GM10248 (cell line): ENCODE measurements at regions of chr18 and their contacts with region 1.

Region 1: DNA sequence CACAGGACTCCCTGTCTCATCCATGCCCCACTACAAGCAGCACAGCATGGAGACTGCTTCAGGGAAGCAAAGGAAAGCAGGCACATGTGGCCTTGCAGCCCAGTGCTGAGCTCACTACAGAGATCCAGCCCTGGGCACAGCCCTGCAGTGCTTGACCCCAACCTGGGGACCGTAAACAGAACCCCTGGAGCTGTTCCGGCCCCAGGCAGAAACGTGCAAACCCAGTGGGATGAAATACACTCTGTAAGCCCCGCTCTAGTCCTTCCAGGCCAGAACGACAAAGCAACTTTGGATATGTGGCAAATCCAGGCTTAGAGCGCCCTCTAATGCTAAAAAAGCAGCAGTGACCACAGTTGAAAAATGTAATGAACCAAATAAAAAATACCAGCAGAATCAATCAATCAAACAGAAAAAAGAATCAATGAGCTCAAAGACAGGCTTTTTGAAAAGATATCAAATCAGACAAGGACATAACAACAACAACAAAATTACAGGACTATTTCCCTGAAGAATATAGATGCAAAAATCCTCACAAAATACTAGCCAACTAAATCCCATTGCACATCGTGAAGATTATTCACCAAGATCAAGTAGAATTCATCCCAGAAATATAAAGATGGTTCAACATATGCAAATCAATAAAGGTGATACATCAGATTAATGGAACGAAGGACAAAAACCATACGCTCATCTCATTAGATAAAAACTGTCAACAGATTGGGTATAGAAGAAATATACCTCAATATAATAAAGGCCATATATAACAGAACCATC is 45.6 kb downstream of the ZNF519 start:
- DNase-seq: peak; percentile 45
- CTCF ChIP-seq: peak; percentile 57

Region 2: DNA sequence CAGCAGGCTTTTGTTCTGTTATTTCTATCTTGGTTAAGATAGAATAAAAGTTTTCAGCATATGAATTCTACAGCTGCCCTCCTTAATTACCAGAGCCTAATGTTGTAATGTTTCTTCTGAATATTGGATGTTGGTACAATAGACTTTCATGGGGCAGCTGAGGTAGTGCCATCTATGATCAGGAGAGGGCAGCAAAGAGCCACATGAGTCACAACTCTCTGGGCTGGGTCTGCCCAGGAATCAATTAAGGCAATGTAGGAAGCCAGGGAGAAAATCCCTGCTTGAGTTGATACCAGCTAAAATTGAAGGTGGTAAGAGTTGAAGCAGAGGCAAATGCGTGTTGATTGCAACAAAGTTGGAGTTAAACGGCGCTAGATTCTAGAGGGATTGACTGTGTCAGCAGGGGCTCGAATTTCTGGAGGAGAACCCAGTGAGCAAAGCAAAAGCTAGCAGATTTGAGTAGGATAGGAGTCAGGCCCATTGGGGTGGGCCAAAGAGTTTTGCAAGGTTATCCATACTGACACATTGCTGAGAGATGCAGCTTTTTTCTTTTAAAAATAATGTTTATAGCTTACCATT is 273.3 kb before region 1 on chr18:
- CTCF ChIA-PET with region 1: interaction called, 70 read pairs
- POLR2A ChIA-PET with region 1: no interaction called
- DNase-seq: peak; percentile 73
- CTCF ChIP-seq: peak; percentile 86

Region 3: GRCh38 chr18:13823707-13824395 is 262.8 kb before region 1 on chr18 and contains the start of gene MC5R:
- CTCF ChIA-PET with region 1: interaction called, 38 read pairs
- POLR2A ChIA-PET with region 1: no interaction called
- DNase-seq: peak; percentile 90
- CTCF ChIP-seq: peak; percentile 99

Region 4: GRCh38 chr18:13831864-13832508 is 254.7 kb before region 1 on chr18:
- CTCF ChIA-PET with region 1: interaction called, 27 read pairs
- POLR2A ChIA-PET with region 1: no interaction called
- DNase-seq: no peak
- CTCF ChIP-seq: no peak

Region 5: GRCh38 chr18:13932285-13933025 is 154.2 kb before region 1 on chr18:
- CTCF ChIA-PET with region 1: no interaction called
- POLR2A ChIA-PET with region 1: no interaction called
- DNase-seq: no peak
- CTCF ChIP-seq: no peak

Region 6: DNA sequence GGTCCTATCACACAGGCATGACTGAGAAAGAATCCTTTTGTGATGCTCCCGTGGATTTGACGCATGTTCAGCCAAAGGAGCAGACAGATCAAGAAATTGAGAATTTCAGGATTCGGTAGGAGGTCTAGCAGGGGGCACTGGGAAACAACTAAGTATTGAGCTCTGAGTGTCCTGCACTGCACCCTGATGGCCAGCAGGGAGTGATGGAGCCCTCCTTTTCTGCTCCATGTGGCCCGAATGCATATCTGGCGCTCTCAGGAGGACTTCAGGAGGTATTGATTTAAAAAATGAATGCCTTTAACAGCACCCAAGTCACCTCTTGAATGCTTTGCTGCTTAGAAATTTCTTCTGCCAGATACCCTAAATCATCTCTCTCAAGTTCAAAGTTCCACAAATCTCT is 12.5 kb before region 1 on chr18:
- CTCF ChIA-PET with region 1: interaction called, 16 read pairs
- POLR2A ChIA-PET with region 1: no interaction called
- DNase-seq: no peak
- CTCF ChIP-seq: no peak

Region 7: DNA sequence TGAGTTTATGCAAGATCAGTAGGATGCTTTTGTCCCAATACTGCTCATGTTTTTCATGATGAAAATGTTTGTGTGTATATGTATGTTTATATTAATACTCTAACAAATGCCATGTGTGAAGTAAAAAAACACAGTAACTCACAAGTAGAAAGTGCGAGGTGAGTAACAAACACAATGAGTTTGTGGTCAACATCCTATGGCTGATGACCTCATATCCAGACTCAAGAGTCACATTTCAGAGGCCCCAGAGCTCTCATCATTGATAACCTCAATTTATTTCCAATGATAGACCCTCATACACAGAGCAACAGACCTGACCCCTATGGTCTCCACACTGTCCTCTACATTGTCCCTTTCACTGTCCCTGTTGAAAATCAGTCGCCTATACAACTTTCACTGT is 11.1 kb after region 1 on chr18:
- CTCF ChIA-PET with region 1: interaction called, 22 read pairs
- POLR2A ChIA-PET with region 1: no interaction called
- DNase-seq: no peak
- CTCF ChIP-seq: no peak